HCT116 (cell line): ENCODE measurements at regions of chr18 and their contacts with region 1.

Region 1: GRCh38 chr18:63439334-63439733 is 17.1 kb upstream of the VPS4B start:
- DNase-seq: peak; percentile 70
- ATAC-seq: peak; percentile 93
- H3K4me3 ChIP-seq: no peak overlapping the region
- H3K27ac ChIP-seq: no peak overlapping the region
- H3K4me1 ChIP-seq: 0 out of 4 replicates have a peak, but pooled peaks cover 0 to 2% of the 10 kb centered on the region in 2 experiments
- H3K27me3 ChIP-seq: no peaks in the 10 kb centered on the region
- CTCF ChIP-seq: peak; percentile 73 to 89 (median 80)
- POLR2A ChIP-seq: no peak
- RAD21 ChIP-seq: peak; percentile 88

Region 2: DNA sequence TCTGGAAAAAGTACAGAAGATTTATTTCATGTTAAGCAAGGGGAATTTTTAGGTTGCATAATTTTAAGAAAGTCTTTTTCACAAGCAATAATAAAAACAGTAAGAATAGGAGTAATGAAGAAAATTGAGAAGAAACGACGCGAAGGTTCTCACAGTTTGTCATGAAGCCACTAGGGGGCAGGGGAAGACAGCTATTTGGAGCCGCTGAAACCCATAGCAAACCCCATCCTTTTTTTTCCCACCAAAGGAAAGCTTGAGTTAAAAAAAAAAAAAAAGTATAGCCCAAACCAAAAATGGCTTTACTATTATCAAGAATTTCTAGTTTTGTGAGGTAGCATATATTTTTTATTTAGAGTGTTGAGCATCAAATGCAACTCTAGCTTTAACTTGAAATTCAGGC is 423.1 kb before region 1 on chr18:
- CTCF ChIA-PET with region 1: interaction called, 43 read pairs
- POLR2A ChIA-PET with region 1: interaction called, 4 read pairs
- RAD21 ChIA-PET with region 1: interaction called in 1 of 2 experiments, 9 read pairs
- intact Hi-C with region 1: loop called (anchors 1 kb)
- DNase-seq: peak; percentile 32
- ATAC-seq: peak; percentile 79
- H3K4me3 ChIP-seq: no peak overlapping the region
- H3K27ac ChIP-seq: no peak overlapping the region
- H3K4me1 ChIP-seq: no peaks in the 10 kb centered on the region
- H3K27me3 ChIP-seq: no peaks in the 10 kb centered on the region
- CTCF ChIP-seq: peak; percentile 73 to 87 (median 73)
- POLR2A ChIP-seq: no peak
- RAD21 ChIP-seq: peak; percentile 82

Region 3: DNA sequence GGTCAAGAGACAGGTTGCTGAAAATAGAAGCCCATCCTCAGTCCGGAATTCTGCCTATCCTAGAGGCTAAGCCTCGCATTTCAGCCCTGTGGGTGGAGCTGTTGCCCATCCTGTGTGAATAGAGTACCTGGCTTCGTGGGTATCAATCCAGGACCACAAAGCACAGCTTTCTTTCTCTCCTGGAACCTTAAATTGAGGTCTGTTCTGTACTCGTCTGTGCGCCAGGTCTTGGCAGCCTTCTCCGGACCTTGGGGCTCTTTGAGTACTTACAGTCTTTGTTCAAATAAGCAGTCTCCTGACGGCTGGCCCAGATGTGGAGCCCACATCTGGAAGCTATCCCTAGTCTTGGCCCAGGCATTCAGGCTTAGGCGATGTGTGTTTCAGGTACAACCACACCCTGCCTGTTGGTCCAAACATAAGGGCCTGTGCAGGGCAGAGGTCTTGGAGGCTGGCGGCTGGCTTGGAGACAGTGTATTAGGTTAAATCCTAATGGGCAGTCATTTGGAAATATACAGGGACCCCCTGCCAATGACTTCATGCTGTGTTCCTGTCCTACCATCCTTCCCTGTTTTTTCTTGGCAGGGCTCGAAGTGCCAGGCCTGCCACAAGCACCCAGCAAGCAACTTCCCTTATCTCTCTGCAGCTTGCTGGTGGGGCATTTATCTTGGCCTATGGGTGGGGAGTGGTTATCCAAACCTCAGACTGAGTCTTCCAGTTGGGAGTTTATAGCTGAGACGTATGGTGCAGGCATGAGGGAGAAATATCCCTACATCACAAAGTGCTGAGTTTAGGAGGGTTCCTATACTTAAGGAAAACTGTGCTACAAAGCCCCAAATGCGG is 413.9 kb before region 1 on chr18:
- CTCF ChIA-PET with region 1: interaction called, 12 read pairs
- POLR2A ChIA-PET with region 1: no interaction called
- RAD21 ChIA-PET with region 1: no interaction called
- intact Hi-C with region 1: loop called (anchors 2 kb)
- DNase-seq: no peak
- ATAC-seq: peak; percentile 84
- H3K4me3 ChIP-seq: no peak overlapping the region
- H3K27ac ChIP-seq: no peak overlapping the region
- H3K4me1 ChIP-seq: no peaks in the 10 kb centered on the region
- H3K27me3 ChIP-seq: no peaks in the 10 kb centered on the region
- CTCF ChIP-seq: peak; percentile 38 to 56 (median 54); a peak in 5 of 6 replicates
- POLR2A ChIP-seq: no peak
- RAD21 ChIP-seq: peak; percentile 70

Region 4: GRCh38 chr18:63131106-63131958 is 308.0 kb before region 1 on chr18:
- CTCF ChIA-PET with region 1: interaction called, 19 read pairs
- POLR2A ChIA-PET with region 1: interaction called, 3 read pairs
- RAD21 ChIA-PET with region 1: no interaction called
- intact Hi-C with region 1: loop called (anchors 1 kb)
- DNase-seq: no peak
- ATAC-seq: peak; percentile 77
- H3K4me3 ChIP-seq: no peak overlapping the region
- H3K27ac ChIP-seq: no peak overlapping the region
- H3K4me1 ChIP-seq: no peaks in the 10 kb centered on the region
- H3K27me3 ChIP-seq: peaks cover 4% of the 10 kb centered on the region; the same call in 1 of the 2 replicates
- CTCF ChIP-seq: peak; percentile 42 to 62 (median 52)
- POLR2A ChIP-seq: no peak
- RAD21 ChIP-seq: peak; percentile 65

Region 5: GRCh38 chr18:63339920-63340484 is 99.3 kb before region 1 on chr18:
- CTCF ChIA-PET with region 1: interaction called, 16 read pairs
- POLR2A ChIA-PET with region 1: no interaction called
- RAD21 ChIA-PET with region 1: no interaction called
- intact Hi-C with region 1: loop called (anchors 2 kb)
- DNase-seq: peak; percentile 10
- ATAC-seq: peak; percentile 57; the same call in 1 of the 2 replicates
- H3K4me3 ChIP-seq: no peak overlapping the region
- H3K27ac ChIP-seq: no peak overlapping the region
- H3K4me1 ChIP-seq: peaks cover 10 to 15% of the 10 kb centered on the region in 2 experiments
- H3K27me3 ChIP-seq: no peaks in the 10 kb centered on the region
- CTCF ChIP-seq: peak; percentile 29 to 78 (median 68); a peak in 5 of 6 replicates
- POLR2A ChIP-seq: no peak
- RAD21 ChIP-seq: peak; percentile 41; the same call in 1 of the 2 replicates

Region 6: DNA sequence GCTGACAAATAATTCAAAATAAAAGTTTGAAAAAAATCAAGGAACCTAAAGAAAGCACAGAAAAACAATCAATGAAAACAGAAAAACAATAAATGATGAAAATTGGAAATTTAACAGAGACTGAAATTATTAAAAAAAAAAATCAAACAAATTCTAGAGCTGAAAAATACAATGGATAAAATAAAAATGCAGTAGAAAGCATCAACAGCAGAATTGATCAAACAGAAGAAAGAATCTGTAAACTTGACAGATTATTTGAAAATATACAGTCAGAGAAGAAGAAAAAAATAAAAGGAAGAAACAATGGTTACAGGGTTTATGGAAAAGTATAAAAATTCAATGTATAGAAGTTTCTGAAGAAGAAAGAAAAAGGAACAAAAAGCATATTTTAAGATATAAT is 188.5 kb after region 1 on chr18:
- CTCF ChIA-PET with region 1: no interaction called
- POLR2A ChIA-PET with region 1: no interaction called
- RAD21 ChIA-PET with region 1: no interaction called
- intact Hi-C with region 1: no loop called
- DNase-seq: no peak
- ATAC-seq: no peak
- H3K4me3 ChIP-seq: no peak overlapping the region
- H3K27ac ChIP-seq: no peak overlapping the region
- H3K4me1 ChIP-seq: no peaks in the 10 kb centered on the region
- H3K27me3 ChIP-seq: no peaks in the 10 kb centered on the region
- CTCF ChIP-seq: no peak
- POLR2A ChIP-seq: no peak
- RAD21 ChIP-seq: no peak

Region 7: DNA sequence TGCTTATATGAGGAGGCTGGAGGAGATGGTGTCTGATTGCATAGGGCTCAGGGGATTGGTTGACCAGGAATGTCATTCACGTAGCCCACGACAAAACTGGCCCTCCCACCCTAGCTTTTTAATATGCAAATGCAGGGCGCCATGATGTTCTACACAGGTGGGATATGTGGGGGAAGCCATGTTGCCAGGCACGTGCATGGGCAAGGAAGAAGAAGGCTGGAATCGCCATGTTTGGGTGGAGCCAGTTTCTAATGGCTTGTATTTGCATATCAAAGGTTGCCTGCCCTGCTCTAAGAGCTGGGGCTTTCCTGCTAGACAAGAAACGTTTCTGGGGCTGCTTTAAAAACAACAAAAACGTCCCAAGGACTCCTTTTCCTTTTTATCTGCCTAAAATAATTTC is 736.1 kb after region 1 on chr18:
- CTCF ChIA-PET with region 1: no interaction called
- POLR2A ChIA-PET with region 1: no interaction called
- RAD21 ChIA-PET with region 1: no interaction called
- intact Hi-C with region 1: no loop called
- DNase-seq: no peak
- ATAC-seq: no peak
- H3K4me3 ChIP-seq: no peak overlapping the region
- H3K27ac ChIP-seq: no peak overlapping the region
- H3K4me1 ChIP-seq: no peaks in the 10 kb centered on the region
- H3K27me3 ChIP-seq: no peaks in the 10 kb centered on the region
- CTCF ChIP-seq: no peak
- POLR2A ChIP-seq: no peak
- RAD21 ChIP-seq: no peak